ENCODE measurements at regions of chr2 and their contacts with region 1.

Region 1: DNA sequence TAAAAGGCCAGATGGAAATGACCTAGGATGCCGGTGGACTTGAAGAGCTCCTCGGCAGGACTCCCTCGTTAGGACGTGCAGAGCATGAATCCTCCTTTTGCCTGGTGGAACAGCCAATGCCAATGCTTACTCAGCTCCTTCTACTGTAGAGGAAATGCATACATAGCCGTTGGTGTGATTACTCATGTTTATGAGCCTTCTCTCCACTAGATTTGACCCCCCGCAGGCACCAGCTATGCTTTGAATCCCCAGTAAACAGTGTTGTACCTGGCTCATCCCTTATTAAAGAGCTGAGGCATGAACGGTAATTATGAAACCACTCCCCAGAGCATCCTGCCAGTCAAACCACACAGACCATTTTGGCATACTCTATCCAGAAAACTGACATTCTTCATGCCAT is 172.8 kb downstream of the ANTXR1 start:
- DNase-seq: no peak
- ATAC-seq: peak; percentile 87
- H3K4me3 ChIP-seq: no peak overlapping the region
- H3K27ac ChIP-seq: peak overlapping the region; percentile 71
- H3K4me1 ChIP-seq: peaks cover 12% of the 10 kb centered on the region
- H3K27me3 ChIP-seq: no peaks in the 10 kb centered on the region
- CTCF ChIP-seq: no peak

Region 2: GRCh38 chr2:69089266-69089665 is 96.5 kb before region 1 on chr2:
- CTCF ChIA-PET with region 1: no interaction called
- POLR2A ChIA-PET with region 1: no interaction called
- in situ Hi-C with region 1: no loop called
- intact Hi-C with region 1: no loop called
- DNase-seq: no peak
- ATAC-seq: no peak
- H3K4me3 ChIP-seq: no peak overlapping the region
- H3K27ac ChIP-seq: no peak overlapping the region; the same call in 1 of the 2 replicates
- H3K4me1 ChIP-seq: peaks cover 5% of the 10 kb centered on the region
- H3K27me3 ChIP-seq: no peaks in the 10 kb centered on the region
- CTCF ChIP-seq: no peak

Region 3: DNA sequence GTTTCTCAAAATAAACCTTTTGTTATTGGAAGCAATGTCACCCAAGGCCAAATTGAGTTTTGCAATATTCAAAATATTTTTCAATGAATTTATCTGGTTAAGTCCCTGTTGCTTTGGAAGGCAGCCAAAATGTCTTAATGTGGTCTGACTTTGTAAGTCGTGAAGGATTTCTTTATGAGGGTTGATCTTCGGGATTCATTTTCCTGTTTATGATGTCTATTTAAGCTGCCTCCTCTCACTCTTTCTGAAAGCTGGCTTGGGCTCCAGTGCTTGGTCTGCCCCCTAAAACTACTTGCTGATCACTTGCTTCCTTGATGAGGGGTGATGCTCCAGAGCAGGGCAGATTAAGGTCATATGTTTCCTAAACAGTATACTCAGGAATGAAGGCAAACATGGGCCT is 31.7 kb before region 1 on chr2:
- CTCF ChIA-PET with region 1: no interaction called
- POLR2A ChIA-PET with region 1: no interaction called
- in situ Hi-C with region 1: no loop called
- intact Hi-C with region 1: no loop called
- DNase-seq: no peak
- ATAC-seq: no peak
- H3K4me3 ChIP-seq: no peak overlapping the region
- H3K27ac ChIP-seq: peak overlapping the region; percentile 60; the same call in 1 of the 2 replicates
- H3K4me1 ChIP-seq: peaks cover 13% of the 10 kb centered on the region
- H3K27me3 ChIP-seq: no peaks in the 10 kb centered on the region
- CTCF ChIP-seq: no peak

Region 4: DNA sequence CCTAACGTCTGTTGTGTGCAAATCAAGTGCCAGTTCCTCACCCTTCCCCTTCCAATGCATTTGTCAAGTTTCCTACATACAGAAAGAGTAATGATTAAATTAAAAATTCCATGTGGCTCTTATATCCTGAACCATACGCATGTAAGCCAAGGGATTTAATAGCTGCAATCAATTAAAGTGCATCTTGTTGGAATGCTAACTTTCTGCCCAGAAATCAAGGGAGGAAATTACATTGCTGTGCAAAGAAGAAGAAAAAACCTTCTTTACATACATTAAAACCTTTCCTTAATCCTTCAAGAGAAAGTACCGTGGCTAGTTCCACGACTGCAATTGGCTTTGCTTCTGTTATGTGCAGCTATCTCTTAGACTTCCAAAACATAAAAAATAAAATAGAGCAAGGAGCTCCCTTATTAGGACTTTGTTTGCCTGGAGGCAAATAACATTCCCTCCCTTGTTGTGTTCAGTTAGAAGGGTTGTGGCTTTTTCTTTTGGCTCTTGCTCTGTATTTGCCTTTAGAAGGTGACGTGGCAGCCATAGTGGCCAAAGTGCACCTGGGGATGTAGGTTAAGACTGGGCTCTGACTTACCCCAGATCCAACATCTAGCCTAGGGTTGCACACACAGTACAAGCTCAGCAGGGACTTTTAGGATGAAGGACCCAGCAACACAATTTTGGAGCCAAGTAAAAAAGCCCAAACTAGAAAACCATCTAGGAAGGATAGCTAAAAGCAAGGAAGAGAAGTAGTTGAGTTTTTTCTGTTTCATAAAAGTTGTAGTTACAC is 14.5 kb before region 1 on chr2:
- CTCF ChIA-PET with region 1: no interaction called
- POLR2A ChIA-PET with region 1: interaction called, 10 read pairs
- in situ Hi-C with region 1: no loop called
- intact Hi-C with region 1: no loop called
- DNase-seq: no peak
- ATAC-seq: no peak
- H3K4me3 ChIP-seq: no peak overlapping the region
- H3K27ac ChIP-seq: peak overlapping the region; percentile 36; the same call in 1 of the 2 replicates
- H3K4me1 ChIP-seq: 0 out of 2 replicates have a peak, but pooled peaks cover 3% of the 10 kb centered on the region
- H3K27me3 ChIP-seq: no peaks in the 10 kb centered on the region
- CTCF ChIP-seq: no peak